H1 (cell line): ENCODE measurements at regions of chr12 and their contacts with region 1.

Region 1: DNA sequence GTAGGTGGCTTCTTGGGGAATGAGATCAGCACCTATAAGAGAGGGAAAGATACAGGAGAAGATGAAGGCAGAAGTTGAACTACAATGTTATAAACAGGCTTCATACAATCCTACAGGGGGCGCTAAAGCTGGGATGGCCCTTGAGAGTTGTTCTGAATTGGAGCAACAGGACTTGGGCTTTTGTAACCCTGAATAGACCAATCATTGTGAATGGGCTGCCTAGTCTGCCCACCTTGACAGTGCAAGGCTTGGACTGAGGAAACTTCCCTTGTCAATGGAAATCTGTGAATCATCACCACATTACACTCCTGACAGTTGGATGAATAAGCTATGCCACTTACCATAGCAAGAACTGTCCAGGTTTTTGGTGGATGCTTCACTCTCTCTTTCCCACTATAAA is 306.1 kb downstream of the KCNC2 start:
- DNase-seq: peak; percentile 19 to 47
- H3K4me3 ChIP-seq: no peak overlapping the region
- H3K27ac ChIP-seq: no peak overlapping the region
- H3K4me1 ChIP-seq: no peaks in the 10 kb centered on the region
- H3K27me3 ChIP-seq: no peaks in the 10 kb centered on the region
- CTCF ChIP-seq: peak in 2 of 3 experiments; percentile 56 to 77; a peak in 3 of 4 replicates
- EP300 ChIP-seq: no peak
- POLR2A ChIP-seq: no peak
- RAD21 ChIP-seq: peak; percentile 38 to 56

Region 2: DNA sequence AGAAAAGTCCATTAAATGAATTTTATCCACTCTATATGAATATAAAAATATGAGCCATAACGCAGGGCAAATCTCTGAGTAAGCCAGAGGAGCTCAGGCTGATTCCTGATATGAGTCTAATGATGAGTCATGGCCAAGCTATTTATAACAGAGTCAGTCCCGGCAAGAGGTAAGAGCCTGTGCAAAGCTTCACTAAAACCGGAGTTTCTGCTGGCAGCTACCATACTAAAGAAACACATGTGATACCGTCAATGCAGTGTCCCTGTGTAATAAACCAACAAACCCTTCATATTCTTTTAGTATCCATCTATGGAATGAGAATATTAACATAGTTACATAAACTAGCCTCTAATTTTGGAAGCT is 13.3 kb before region 1 on chr12:
- CTCF ChIA-PET with region 1: interaction called, 17 read pairs
- POLR2A ChIA-PET with region 1: no interaction called
- DNase-seq: no peak
- H3K4me3 ChIP-seq: no peak overlapping the region
- H3K27ac ChIP-seq: no peak overlapping the region
- H3K4me1 ChIP-seq: peaks cover 0 to 4% (median 0%) of the 10 kb centered on the region in 4 experiments; a peak in 1 of 7 replicates
- H3K27me3 ChIP-seq: peaks cover 0 to 1% (median 0%) of the 10 kb centered on the region in 4 experiments; a peak in 1 of 7 replicates
- CTCF ChIP-seq: no peak
- EP300 ChIP-seq: no peak
- POLR2A ChIP-seq: no peak
- RAD21 ChIP-seq: no peak

Region 3: DNA sequence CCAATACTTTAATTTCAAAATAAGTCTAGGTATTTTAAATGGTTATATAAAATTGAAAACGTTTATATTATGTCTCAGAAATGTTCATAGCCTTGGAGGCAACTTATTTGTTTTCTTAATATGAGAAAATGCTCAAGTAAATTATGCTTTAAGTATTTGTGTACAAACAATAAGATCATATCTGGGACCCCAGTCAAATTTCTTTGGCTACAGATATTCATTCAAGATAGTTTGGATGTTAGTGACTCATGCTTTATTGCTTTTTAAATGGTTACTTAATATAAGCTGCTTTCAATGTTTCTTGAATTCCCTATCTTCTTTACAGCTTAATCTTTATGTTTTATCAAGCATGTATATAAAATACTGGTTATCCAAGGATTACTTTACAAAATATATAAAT is 14.8 kb after region 1 on chr12:
- CTCF ChIA-PET with region 1: interaction called, 12 read pairs
- POLR2A ChIA-PET with region 1: no interaction called
- DNase-seq: no peak
- H3K4me3 ChIP-seq: no peak overlapping the region
- H3K27ac ChIP-seq: no peak overlapping the region
- H3K4me1 ChIP-seq: no peaks in the 10 kb centered on the region
- H3K27me3 ChIP-seq: no peaks in the 10 kb centered on the region
- CTCF ChIP-seq: no peak
- EP300 ChIP-seq: no peak
- POLR2A ChIP-seq: no peak
- RAD21 ChIP-seq: no peak